ENCODE measurements at regions of chr2 and their contacts with region 1.

Region 1: DNA sequence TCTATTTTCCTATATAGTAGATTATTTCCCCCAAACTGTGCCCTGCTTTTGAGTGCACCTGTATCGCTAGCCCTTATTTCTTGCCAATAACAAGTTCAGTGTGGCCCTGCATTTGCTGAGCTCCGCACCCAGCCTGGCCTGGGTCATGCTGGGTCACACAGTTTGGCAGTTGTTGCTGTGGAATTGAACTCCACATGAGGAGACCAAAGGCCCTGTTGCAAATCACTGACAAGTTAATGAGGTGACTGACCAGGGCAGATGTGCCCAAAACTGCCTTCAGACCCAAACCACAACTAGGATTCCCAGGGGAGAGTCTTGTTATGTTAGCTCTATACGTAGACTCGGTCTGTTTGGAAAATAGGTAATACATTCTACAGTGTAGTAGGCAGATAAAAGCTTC is 31.0 kb downstream of the COL4A4 start:
- DNase-seq: no peak
- ATAC-seq: no peak

Region 2: GRCh38 chr2:227238238-227239237 is 105.6 kb after region 1 on chr2:
- intact Hi-C with region 1: loop called (anchors 5 kb)
- DNase-seq: peak in 1 of 2 donors; percentile 77
- ATAC-seq: peak; percentile 48

Measured in left colon (tissue), 2 donors.